Naive thymus-derived CD4-positive, alpha-beta T cell (primary cell): ENCODE measurements at regions of chr15 and their contacts with region 1.

Region 1: GRCh38 chr15:52039925-52040781 is 21.1 kb downstream of the MAPK6 start:
- DNase-seq: no peak
- ATAC-seq: peak; percentile 51
- H3K4me3 ChIP-seq: no peak overlapping the region
- H3K4me3 Mint-ChIP-seq: peak overlapping the region in 7 of 10 donors; percentile 4 to 45 (median 26)
- H3K27ac ChIP-seq: peak overlapping the region; percentile 32
- H3K27ac Mint-ChIP-seq: peak overlapping the region; percentile 0 to 91 (median 42)
- H3K4me1 ChIP-seq: peaks cover 4 to 16% of the 10 kb centered on the region in 2 donors
- H3K4me1 Mint-ChIP-seq: peaks cover 34 to 87% (median 64%) of the 10 kb centered on the region in 7 donors
- H3K27me3 ChIP-seq: no peaks in the 10 kb centered on the region
- H3K27me3 Mint-ChIP-seq: no peaks in the 10 kb centered on the region

Region 2: DNA sequence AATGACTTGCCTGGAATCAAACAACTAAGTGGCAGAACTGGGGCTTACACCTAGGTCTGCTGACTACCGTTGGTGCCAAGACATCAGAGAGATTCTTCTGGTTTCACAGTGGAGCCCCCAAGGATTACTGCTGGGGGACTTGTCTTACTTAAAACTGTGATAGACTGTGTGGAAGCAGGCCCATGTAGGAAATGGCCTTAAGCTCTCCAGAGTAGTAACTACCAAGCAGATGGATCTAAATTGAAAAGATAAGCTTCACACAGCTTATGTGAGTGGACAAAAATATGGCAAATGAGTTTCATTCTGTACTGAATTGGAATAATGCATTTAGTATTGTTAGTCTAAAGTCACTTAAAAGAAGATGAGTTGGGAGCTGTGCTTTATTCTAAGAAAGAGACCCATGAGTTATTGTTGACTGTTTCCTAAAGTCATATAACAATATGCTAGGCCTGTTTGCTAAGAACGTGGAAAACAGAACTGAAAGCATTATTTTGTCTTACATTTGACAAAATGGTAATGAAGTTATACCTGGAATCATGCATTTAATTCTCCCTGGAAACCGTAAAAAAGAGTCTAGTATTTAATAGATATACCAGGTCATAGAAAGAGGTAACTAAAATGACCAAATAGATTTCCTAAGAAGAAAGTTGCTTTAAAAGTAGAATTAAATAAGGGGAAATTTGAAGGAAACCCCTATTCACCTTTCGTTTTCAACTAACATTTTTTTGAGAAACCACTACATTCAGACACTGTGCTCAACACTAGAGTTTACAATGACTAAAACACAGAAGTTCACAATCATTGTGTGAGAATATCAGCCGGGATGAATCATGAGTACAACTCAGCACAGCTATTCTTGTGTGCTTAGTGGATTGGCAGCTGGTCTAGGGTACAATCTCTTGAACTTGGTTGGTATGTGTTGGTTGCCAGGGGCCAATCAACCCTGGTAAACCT is 34.1 kb before region 1 on chr15:
- CTCF ChIA-PET with region 1: no interaction called
- POLR2A ChIA-PET with region 1: interaction called, 3 read pairs
- intact Hi-C with region 1: loop called in 1 of 2 experiments (anchors 1 kb)
- DNase-seq: no peak
- ATAC-seq: no peak
- H3K4me3 ChIP-seq: no peak overlapping the region
- H3K4me3 Mint-ChIP-seq: peak overlapping the region in 1 of 10 donors; percentile 54
- H3K27ac ChIP-seq: no peak overlapping the region
- H3K27ac Mint-ChIP-seq: peak overlapping the region in 1 of 9 donors; percentile 82
- H3K4me1 ChIP-seq: peaks cover 0 to 9% of the 10 kb centered on the region in 2 donors
- H3K4me1 Mint-ChIP-seq: peaks cover 9 to 58% (median 16%) of the 10 kb centered on the region in 7 donors
- H3K27me3 ChIP-seq: no peaks in the 10 kb centered on the region
- H3K27me3 Mint-ChIP-seq: peaks cover 0 to 2% (median 0%) of the 10 kb centered on the region in 5 donors